ENCODE measurements at regions of chr15 and their contacts with region 1.

Region 1: DNA sequence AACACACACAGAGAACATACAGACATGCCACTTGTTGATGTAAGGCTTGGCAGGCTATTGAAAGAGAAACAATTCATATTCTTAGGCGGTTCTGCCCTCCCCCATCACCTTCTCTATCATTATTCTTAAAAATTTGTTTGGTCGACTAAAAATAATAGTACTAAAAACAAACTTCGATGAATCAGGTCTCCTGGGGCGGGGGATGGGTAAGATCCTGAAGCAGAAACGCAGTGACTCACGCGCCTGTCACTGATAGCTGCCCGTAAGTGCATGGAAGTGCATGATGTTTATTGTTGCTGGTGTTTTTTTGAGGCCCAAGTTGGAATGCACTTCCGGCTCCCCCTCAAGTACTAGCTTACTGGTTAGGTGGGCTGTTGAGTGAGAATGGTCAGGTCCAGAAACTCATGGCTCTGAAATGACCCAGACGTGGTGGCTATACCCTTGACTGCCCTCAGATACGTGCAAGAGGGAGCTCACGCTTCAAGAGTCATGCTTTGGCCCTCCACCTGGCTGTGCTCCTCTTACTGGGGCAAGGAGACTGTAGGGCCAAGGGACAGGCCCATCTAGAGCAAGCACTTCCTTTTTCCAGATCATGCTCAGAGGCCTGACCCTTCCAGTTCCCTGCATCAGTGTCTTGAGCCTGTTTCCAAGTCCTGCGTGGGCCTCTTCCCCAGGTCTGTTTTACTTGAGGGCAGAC is 10.9 kb downstream of the SMAD3 start:
- DNase-seq: peak in 2 of 42 donors; percentile 39 to 53

Region 2: GRCh38 chr15:66946578-66947164 is 129.6 kb before region 1 on chr15:
- intact Hi-C with region 1: loop called (anchors 10 kb)
- DNase-seq: peak in 41 of 42 donors; percentile 44 to 89 (median 74)

Region 3: DNA sequence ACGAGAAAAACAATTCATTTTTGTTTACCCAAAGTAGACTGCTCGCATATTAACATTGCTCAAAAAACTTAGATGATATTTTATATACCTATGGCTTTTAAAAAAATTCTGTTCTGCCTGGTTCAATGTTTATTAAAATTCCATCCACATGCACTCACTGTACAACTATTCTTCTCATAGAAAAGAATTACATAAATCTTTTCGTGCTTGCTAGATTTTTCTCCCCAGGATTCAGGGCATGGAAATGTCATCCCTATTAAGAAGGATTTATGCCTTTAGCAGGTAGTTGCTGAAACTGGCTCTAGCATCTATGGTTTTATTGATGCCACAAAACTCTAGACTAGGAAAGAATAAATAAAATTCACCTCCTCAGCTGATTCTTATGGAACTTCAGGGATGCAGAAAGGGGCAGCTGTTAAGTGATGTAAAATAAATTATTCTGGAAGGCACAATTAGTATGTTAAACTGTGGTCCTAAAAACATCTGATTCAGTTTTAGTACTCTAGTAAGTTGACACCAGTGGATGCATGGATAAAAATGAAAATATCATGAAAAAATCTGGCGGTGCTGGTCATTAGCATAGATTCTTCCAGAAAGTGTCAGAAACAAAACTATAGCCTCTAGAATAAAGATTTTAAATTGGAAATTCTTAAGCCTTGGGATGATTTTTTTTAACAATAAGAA is 136.5 kb after region 1 on chr15:
- intact Hi-C with region 1: no loop called
- DNase-seq: no peak